ENCODE measurements at regions of chr7 and their contacts with region 1.

Region 1: DNA sequence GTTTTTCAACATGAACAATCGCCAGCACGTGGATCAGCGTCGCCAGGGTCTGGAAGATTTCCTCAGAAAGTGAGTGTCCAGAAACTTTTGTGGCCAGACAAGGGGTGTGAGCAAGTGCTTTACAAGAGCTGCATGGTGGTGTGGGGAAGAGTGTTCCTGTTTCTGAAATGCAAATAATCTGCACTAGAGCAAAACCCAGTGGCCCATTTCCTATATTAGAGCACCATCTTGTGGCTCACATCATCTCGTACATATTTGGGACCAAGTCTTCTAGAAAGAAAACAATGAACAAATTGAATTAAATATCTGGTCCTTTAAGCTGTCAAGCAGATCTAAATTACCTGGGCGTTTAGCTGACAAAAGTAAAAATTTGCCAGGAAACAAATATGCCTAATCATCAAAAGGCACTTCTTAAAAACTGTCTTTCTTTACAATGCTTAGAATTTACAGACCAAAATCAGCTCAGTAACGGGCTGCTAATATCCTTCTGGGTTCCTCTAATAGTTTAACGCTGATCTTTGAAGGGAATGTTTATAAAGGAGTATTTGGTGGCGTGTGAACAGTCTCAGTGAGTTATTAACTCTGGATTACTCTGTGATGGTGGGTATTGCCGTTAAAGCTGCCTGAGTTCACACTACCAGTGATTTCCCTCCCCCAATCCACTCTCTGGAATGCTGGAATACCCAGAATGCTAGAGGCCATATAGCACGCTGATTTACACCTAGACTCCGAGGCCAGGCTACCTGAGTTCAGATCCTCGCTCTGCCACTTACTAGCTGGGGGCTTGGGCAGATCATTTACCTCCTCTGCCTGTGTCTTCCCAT is 73.6 kb downstream of the SNX10 start:
- DNase-seq: peak; percentile 60
- H3K4me3 ChIP-seq: no peak overlapping the region
- H3K27ac ChIP-seq: no peak overlapping the region
- H3K4me1 ChIP-seq: peaks cover 0 to 9% of the 10 kb centered on the region in 2 experiments; a peak in 2 of 4 replicates
- H3K27me3 ChIP-seq: peaks cover 22% of the 10 kb centered on the region; the same call in 1 of the 2 replicates
- CTCF ChIP-seq: peak; percentile 94
- EP300 ChIP-seq: no peak
- RAD21 ChIP-seq: peak; percentile 100

Region 2: DNA sequence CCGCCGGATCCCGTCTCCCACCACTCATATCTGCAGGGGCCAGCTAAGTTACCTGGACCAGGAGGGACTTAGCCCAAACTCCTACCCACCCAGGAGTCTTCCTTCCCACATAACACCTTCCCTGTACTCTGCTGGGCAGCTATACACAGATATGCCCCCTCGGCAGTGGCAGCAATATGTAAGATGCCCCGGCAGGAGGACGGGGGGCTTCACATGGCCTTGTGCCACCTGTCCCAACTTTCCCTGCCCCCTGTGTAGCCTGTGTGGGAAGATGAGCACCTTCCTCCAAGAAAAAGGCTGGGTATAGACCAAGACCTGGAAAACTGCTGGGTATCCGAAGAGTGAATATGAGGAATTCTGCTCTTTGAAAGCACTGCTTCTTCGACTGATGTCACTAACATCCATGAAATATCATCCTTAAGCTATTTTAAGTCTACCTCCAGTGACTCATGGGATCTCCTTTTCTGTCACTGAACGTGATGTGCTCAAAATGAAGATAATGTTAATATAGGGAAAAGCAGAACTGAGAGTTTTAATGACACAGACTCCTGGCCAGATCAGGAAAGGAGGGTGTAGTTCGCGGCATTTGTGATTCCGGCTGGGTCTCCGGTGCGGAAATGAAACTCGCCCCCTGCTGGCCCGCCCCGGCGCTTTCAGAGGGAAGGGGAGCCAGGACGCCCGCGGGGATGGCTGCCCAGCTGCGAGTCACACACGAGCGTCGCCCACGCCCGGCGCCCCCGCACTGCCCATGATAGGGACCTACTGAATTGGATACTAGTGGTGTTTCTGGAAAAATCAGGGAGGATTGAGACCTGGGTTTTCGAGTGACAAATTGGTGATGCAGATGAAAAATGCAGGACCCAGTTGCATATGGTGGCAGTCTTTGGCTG is 470.1 kb before region 1 on chr7:
- CTCF ChIA-PET with region 1: interaction called, 603 read pairs
- POLR2A ChIA-PET with region 1: no interaction called
- DNase-seq: peak; percentile 86
- H3K4me3 ChIP-seq: peak overlapping the region; percentile 25 to 42; a peak in 3 of 4 replicates
- H3K27ac ChIP-seq: no peak overlapping the region
- H3K4me1 ChIP-seq: peaks cover 0 to 5% of the 10 kb centered on the region in 2 experiments; a peak in 2 of 4 replicates
- H3K27me3 ChIP-seq: peaks cover 5% of the 10 kb centered on the region; the same call in 1 of the 2 replicates
- CTCF ChIP-seq: peak; percentile 66
- EP300 ChIP-seq: no peak
- RAD21 ChIP-seq: peak; percentile 35

Region 3: GRCh38 chr7:26090927-26091519 is 274.3 kb before region 1 on chr7:
- CTCF ChIA-PET with region 1: interaction called, 363 read pairs
- POLR2A ChIA-PET with region 1: interaction called, 4 read pairs
- DNase-seq: peak; percentile 80
- H3K4me3 ChIP-seq: no peak overlapping the region
- H3K27ac ChIP-seq: no peak overlapping the region
- H3K4me1 ChIP-seq: peaks cover 0 to 2% of the 10 kb centered on the region in 2 experiments; a peak in 2 of 4 replicates
- H3K27me3 ChIP-seq: no peaks in the 10 kb centered on the region
- CTCF ChIP-seq: peak; percentile 97
- EP300 ChIP-seq: no peak
- RAD21 ChIP-seq: peak; percentile 94

Region 4: DNA sequence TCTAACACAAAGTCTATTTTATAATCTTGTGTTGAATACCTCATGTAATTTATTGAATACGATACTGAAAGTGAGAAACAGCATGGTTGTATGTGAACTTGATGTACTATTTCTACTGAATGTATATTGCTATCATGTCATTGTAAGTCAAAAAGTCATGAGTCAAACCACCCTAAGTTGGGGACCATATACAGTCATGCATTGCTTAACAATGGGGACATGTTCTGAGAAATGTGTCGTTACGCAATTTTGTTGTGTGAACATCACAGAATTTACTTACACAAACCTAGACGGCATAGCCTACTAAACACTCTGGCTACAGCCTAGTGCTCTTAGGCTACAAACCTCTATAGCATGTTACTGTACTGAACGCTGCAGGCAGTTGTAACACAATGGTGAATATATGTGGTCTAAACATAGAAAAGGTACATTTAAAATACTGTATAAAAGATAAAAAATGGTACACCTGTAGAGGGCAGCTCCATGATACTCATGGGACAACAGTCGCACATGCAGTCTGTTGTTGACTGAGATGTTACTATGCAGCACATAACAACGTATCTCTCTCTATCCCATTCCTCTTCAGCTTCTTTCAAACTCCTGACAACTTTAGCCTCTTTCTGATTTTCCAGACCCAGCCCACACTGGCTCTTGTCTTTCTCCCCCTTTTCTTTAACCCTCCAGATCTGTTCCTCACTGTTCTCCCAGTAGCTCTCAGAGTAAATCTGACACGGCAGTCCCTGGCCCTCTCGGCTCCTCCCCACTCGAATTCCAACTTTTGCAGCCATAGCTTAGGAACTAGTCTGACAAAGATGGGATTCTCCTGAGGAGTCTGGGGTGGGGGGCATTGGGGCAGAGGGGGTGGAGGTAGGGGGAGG is 16.4 kb after region 1 on chr7:
- CTCF ChIA-PET with region 1: interaction called, 33 read pairs
- POLR2A ChIA-PET with region 1: no interaction called
- DNase-seq: no peak
- H3K4me3 ChIP-seq: no peak overlapping the region
- H3K27ac ChIP-seq: no peak overlapping the region
- H3K4me1 ChIP-seq: peaks cover 0 to 3% of the 10 kb centered on the region in 2 experiments; a peak in 2 of 4 replicates
- H3K27me3 ChIP-seq: peaks cover 18% of the 10 kb centered on the region
- CTCF ChIP-seq: no peak
- EP300 ChIP-seq: no peak
- RAD21 ChIP-seq: no peak

Region 5: DNA sequence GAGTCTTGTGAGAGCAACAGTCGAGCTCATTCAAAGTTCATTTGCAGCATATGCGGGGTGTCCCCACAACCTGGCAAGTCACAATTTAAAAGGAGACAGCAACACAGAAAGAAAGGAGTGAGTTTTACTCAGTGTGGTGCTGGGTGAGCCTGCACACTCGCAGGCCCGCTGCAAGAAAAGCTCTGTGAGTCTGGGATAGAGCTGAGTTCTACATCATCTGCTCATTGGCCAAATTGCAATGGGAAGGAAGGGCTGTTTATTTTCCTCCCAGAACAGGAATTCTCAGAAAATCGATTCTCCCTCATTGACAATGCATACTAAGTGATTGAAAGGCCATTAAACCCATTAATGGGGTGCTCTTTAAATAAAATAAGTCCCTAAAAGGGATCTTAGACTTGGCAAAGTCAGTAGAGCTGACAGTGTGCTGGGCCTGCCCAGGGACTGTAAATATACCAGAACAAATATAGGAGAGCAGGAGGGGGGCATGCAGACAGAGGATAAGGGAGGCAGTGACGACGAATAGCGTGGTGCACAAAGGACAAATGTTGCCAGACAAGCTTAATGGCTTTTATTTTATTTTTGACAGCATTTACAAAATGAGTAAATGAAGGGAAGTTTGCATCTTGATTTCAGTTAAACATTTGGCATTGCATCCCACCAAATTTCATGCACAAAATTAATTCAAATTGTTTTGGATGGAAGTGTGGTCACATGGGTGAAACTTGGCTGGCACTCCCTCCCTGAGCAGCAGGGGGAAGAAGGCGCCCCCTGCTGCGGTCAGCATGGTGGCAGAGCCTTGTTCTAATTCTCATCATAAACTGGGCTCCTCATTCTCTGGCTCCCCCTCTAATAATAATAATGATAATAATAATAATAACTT is 142.1 kb after region 1 on chr7:
- CTCF ChIA-PET with region 1: interaction called, 28 read pairs
- POLR2A ChIA-PET with region 1: no interaction called
- DNase-seq: peak; percentile 45
- H3K4me3 ChIP-seq: no peak overlapping the region
- H3K27ac ChIP-seq: no peak overlapping the region
- H3K4me1 ChIP-seq: no peaks in the 10 kb centered on the region; a peak in 1 of 4 replicates
- H3K27me3 ChIP-seq: 0 out of 2 replicates have a peak, but pooled peaks cover 4% of the 10 kb centered on the region
- CTCF ChIP-seq: no peak
- EP300 ChIP-seq: no peak
- RAD21 ChIP-seq: peak; percentile 37

Region 6: GRCh38 chr7:26675143-26675887 is 310.0 kb after region 1 on chr7:
- CTCF ChIA-PET with region 1: interaction called, 716 read pairs
- POLR2A ChIA-PET with region 1: no interaction called
- DNase-seq: no peak
- H3K4me3 ChIP-seq: no peak overlapping the region
- H3K27ac ChIP-seq: no peak overlapping the region
- H3K4me1 ChIP-seq: no peaks in the 10 kb centered on the region; a peak in 1 of 4 replicates
- H3K27me3 ChIP-seq: no peaks in the 10 kb centered on the region
- CTCF ChIP-seq: no peak
- EP300 ChIP-seq: no peak
- RAD21 ChIP-seq: no peak

Region 7: DNA sequence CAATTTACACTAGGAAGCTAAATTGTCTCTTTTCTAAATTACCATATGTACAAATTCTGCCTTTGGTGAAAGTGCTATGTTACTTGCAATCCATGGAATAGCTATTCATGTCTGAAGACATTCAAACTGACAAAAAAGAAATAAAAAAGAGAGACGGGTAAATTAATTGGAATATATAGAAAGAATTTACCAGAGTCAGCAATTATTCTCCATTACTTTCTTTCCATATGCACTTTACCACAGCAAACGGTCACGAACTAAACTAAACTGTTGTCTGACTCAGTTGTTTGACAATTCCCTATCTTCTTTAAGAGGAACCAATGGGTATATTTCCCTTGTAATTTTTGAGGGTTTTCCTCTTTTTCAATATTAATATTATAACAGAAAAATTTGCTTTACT is 644.8 kb after region 1 on chr7:
- CTCF ChIA-PET with region 1: no interaction called
- POLR2A ChIA-PET with region 1: no interaction called
- DNase-seq: no peak
- H3K4me3 ChIP-seq: no peak overlapping the region
- H3K27ac ChIP-seq: no peak overlapping the region
- H3K4me1 ChIP-seq: no peaks in the 10 kb centered on the region
- H3K27me3 ChIP-seq: no peaks in the 10 kb centered on the region
- CTCF ChIP-seq: no peak
- EP300 ChIP-seq: no peak
- RAD21 ChIP-seq: no peak

Measured in SK-N-SH (cell line).